Naive thymus-derived CD4-positive, alpha-beta T cell (primary cell): ENCODE measurements at regions of chr7 and their contacts with region 1.

Region 1: DNA sequence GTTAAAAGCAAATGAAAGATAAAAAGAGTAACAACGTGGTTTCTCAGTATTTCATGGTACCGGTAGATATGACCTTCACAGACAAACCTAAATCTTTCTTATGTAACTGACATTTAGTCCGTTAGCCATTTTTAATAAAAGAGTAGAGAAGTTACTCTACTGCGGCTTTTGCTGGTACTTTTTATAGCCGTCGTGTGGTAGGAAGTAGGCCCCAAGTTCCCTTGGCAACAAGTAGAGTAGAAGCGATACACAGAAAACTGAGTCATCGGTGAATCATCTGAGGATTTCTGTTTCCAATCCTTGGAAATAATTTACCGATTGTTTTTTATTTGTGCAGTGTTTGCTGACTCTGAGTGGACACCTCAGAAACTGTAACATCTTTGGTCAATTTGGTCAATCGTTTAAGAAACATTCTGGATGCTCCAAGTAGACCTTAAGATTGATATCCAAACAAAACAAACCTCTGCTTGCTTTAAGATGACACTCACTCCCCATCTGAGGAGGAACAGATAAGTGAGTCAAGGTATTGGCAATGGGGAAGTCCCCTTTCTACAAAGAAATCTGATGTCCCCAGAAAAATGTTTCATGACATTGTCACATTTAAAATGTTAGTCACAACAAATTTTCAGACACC is 63.9 kb upstream of the AHR start:
- DNase-seq: peak in 8 of 9 donors; percentile 48 to 85 (median 69)
- ATAC-seq: peak; percentile 92
- H3K4me3 ChIP-seq: peak overlapping the region; percentile 47
- H3K4me3 Mint-ChIP-seq: peak overlapping the region; percentile 53 to 92 (median 76)
- H3K27ac ChIP-seq: peak overlapping the region; percentile 69
- H3K27ac Mint-ChIP-seq: peak overlapping the region; percentile 84 to 100 (median 96)
- H3K4me1 ChIP-seq: peaks cover 22 to 24% of the 10 kb centered on the region in 2 donors
- H3K4me1 Mint-ChIP-seq: peaks cover 19 to 50% (median 37%) of the 10 kb centered on the region in 7 donors
- H3K27me3 ChIP-seq: no peaks in the 10 kb centered on the region
- H3K27me3 Mint-ChIP-seq: peaks cover 0 to 4% (median 0%) of the 10 kb centered on the region in 5 donors

Region 2: DNA sequence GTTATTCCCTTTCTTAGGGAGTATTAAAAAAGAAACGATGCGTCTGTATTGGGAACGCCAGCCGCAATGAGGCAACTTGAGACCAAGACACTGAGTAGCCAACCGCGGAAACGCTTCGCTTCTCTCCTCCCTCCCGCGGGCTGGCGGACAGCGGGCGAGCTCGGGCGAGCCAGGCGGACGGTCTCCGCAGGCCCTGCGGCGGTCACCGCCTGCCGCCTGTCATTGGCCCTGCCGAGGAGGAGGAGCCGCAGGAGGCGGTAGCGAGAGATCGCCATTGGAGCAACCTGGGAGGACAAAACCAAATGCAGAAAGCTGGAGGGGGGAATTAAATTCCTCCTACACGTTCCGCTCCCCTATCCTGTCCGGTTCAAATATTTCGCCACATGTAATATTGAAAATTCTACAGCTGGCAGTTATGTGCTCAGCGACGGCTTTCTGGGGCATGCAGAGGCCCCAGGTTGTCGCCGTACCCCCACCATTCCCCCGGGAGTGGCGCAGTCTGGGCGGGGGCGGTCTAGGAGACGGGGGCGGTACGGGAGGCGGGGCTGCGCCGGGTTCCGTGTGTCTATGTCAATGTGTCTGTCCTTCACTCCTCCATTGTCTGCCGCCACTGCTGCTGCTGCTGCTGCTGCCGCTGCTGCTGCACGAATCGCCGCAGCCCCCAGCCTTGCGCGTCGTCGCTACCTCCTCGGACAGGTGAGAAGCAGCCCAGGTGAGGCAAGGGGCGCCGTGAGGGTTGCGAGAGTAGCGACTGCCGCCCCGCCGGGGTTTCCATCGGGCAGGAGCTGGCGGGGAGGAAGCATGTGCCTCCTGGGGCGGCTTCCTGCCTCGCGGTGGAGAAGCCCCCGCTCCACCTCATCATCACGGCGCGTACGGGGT is 588.7 kb before region 1 on chr7 and contains the starts of genes ANKMY2 and BZW2:
- CTCF ChIA-PET with region 1: no interaction called
- POLR2A ChIA-PET with region 1: no interaction called
- intact Hi-C with region 1: loop called (anchors 1 kb)
- DNase-seq: peak; percentile 88 to 96 (median 93)
- ATAC-seq: peak; percentile 94
- H3K4me3 ChIP-seq: peak within 1 kb of the TSS; percentile 87
- H3K4me3 Mint-ChIP-seq: peak within 1 kb of the TSS; percentile 89 to 100 (median 97)
- H3K27ac ChIP-seq: peak within 1 kb of the TSS; percentile 76
- H3K27ac Mint-ChIP-seq: peak within 1 kb of the TSS; percentile 91 to 99 (median 97)
- H3K4me1 ChIP-seq: peaks cover 14 to 25% of the 10 kb centered on the region in 2 donors
- H3K4me1 Mint-ChIP-seq: peaks cover 46 to 83% (median 65%) of the 10 kb centered on the region in 7 donors
- H3K27me3 ChIP-seq: no peaks in the 10 kb centered on the region
- H3K27me3 Mint-ChIP-seq: no peaks in the 10 kb centered on the region
- total RNA-seq, gene ANKMY2: 6.3 to 16.4 (median 8.7) TPM
- total RNA-seq, gene BZW2: 24.6 to 52.1 (median 28.0) TPM

Region 3: DNA sequence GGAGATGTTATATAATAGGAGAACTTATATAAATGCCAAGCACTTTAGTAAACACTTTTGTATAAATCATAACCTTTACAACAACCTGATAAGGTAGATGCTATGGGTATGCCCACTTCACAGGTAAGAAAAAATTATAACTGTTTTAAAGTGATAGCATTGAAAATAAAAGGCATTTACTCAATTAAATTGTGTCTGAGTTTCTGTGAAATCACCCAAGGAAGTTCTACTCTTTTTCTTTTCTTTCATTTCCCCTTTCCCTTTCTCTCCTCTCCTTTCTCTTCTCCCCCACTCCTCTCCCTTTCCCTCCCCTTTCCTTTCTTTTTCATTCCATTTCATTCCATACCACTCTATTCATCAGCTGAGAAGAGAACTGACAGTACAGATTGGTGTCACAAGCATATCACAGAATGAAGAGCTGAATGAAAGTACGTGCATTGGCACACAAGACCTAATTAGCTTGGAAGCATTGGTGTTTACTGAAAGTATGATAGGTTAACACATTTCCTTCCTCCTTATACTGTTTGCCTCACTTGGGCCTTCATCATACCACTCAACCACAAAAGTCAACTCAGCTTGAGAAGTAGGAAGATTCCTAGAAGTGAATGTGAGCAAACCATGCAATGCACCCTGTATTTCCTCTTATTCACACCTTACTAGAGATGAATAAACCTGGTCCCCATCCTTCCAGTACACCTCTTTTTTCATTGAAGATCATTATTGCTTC is 234.8 kb before region 1 on chr7:
- CTCF ChIA-PET with region 1: no interaction called
- POLR2A ChIA-PET with region 1: no interaction called
- intact Hi-C with region 1: loop called in 1 of 2 experiments (anchors 1 kb)
- DNase-seq: peak in 1 of 9 donors; percentile 5
- ATAC-seq: peak; percentile 65
- H3K4me3 ChIP-seq: no peak overlapping the region
- H3K4me3 Mint-ChIP-seq: peak overlapping the region in 1 of 10 donors; percentile 74
- H3K27ac ChIP-seq: no peak overlapping the region
- H3K27ac Mint-ChIP-seq: peak overlapping the region in 2 of 9 donors; percentile 23 to 85
- H3K4me1 ChIP-seq: no peaks in the 10 kb centered on the region
- H3K4me1 Mint-ChIP-seq: peaks cover 0 to 23% (median 5%) of the 10 kb centered on the region in 7 donors
- H3K27me3 ChIP-seq: no peaks in the 10 kb centered on the region
- H3K27me3 Mint-ChIP-seq: peaks cover 0 to 11% (median 6%) of the 10 kb centered on the region in 5 donors

Region 4: GRCh38 chr7:17139081-17139480 is 95.4 kb before region 1 on chr7:
- CTCF ChIA-PET with region 1: no interaction called
- POLR2A ChIA-PET with region 1: no interaction called
- intact Hi-C with region 1: loop called (anchors 1 kb)
- DNase-seq: peak in 5 of 9 donors; percentile 1 to 39 (median 23)
- ATAC-seq: peak; percentile 47
- H3K4me3 ChIP-seq: peak overlapping the region; percentile 4
- H3K4me3 Mint-ChIP-seq: peak overlapping the region; percentile 10 to 77 (median 74)
- H3K27ac ChIP-seq: peak overlapping the region; percentile 67
- H3K27ac Mint-ChIP-seq: peak overlapping the region; percentile 86 to 96 (median 89)
- H3K4me1 ChIP-seq: peaks cover 41 to 42% of the 10 kb centered on the region in 2 donors
- H3K4me1 Mint-ChIP-seq: peaks cover 34 to 76% (median 48%) of the 10 kb centered on the region in 7 donors
- H3K27me3 ChIP-seq: no peaks in the 10 kb centered on the region
- H3K27me3 Mint-ChIP-seq: no peaks in the 10 kb centered on the region

Region 5: DNA sequence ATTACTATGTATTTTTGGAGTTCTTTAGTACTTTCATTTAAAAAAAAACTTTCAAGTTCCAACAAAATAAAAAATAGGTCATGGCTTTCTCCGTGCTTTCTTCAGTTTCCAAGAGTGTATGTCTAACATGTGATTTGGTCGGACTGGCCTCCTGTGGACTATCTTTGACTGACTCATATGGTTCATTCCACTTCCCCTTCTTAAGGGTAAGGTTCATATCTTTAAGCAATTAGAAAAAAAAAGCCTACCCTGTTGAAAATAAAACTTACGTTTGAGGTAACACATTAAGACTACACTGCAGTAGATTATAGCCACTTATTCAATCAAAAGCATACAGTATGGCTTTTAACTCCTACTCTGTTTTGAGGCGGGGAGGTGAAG is 48.8 kb before region 1 on chr7:
- CTCF ChIA-PET with region 1: no interaction called
- POLR2A ChIA-PET with region 1: no interaction called
- intact Hi-C with region 1: loop called in 1 of 2 experiments (anchors 5 kb)
- DNase-seq: no peak
- ATAC-seq: peak; percentile 83
- H3K4me3 ChIP-seq: no peak overlapping the region
- H3K4me3 Mint-ChIP-seq: no peak overlapping the region
- H3K27ac ChIP-seq: no peak overlapping the region
- H3K27ac Mint-ChIP-seq: no peak overlapping the region
- H3K4me1 ChIP-seq: no peaks in the 10 kb centered on the region
- H3K4me1 Mint-ChIP-seq: peaks cover 0 to 10% (median 0%) of the 10 kb centered on the region in 7 donors
- H3K27me3 ChIP-seq: no peaks in the 10 kb centered on the region
- H3K27me3 Mint-ChIP-seq: peaks cover 0 to 9% (median 4%) of the 10 kb centered on the region in 5 donors

Region 6: DNA sequence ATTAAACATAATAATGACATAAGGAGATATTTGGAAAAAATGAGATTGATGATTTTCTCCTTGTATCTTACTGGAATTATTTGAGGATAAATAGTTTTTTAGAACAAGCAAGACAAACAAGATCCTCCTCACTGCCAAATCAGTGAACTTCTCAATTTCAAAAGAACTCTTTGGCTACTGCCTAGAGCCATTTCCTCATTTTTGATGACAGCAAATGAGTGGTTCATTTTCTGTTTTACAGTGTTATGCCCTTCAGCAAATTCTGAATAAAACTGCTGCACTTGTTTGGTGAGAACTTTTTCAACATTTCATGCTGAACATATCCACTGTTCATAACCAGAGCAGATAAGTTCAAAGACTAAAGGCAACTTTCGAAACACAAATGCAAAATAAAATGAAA is 21.4 kb after region 1 on chr7:
- CTCF ChIA-PET with region 1: no interaction called
- POLR2A ChIA-PET with region 1: no interaction called
- intact Hi-C with region 1: loop called in 1 of 2 experiments (anchors 2 kb)
- DNase-seq: no peak
- ATAC-seq: no peak
- H3K4me3 ChIP-seq: no peak overlapping the region
- H3K4me3 Mint-ChIP-seq: no peak overlapping the region
- H3K27ac ChIP-seq: no peak overlapping the region
- H3K27ac Mint-ChIP-seq: no peak overlapping the region
- H3K4me1 ChIP-seq: no peaks in the 10 kb centered on the region
- H3K4me1 Mint-ChIP-seq: peaks cover 0 to 3% (median 0%) of the 10 kb centered on the region in 7 donors
- H3K27me3 ChIP-seq: no peaks in the 10 kb centered on the region
- H3K27me3 Mint-ChIP-seq: no peaks in the 10 kb centered on the region